ENCODE measurements at regions of chr10 and their contacts with region 1.

Region 1: DNA sequence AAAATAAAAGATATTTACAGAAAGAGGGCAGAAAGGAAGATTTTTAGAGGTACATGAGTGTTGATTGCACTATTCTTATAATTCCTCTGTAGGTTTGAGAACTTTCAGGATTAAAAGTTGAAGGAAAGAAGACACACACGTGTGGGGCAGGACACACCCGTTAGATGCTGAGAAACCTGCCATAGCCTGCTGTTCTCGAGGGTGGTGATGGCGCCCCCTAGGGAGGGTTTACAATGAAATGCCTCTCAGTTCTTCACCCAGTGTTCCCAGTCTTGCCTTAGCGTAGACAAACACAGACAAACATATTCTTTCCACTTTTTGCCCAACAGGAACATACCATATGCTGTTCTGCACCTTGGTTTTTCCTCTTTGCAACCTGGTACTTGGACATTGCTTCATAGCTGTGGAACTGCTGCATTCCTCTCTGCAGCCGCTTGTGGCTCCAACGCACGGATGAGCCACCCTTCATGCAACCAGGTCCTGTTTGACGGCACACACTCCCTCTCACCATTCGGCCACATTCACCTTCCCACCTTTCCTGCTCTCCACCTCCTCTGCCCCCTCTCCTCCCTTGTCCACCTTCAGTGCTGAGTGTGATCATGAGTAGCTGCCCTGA is 23.3 kb upstream of the HSPA12A start:
- DNase-seq: peak; percentile 55 to 61 (median 58)
- ATAC-seq: peak; percentile 91
- H3K4me3 ChIP-seq: no peak overlapping the region
- H3K27ac ChIP-seq: no peak overlapping the region
- H3K4me1 ChIP-seq: no peaks in the 10 kb centered on the region; a peak in 1 of 5 replicates
- H3K27me3 ChIP-seq: peaks cover 0 to 20% of the 10 kb centered on the region in 2 experiments; a peak in 3 of 5 replicates
- CTCF ChIP-seq: peak; percentile 61 to 68 (median 64)
- EP300 ChIP-seq: no peak
- POLR2A ChIP-seq: no peak
- RAD21 ChIP-seq: peak; percentile 13 to 52; a peak in 2 of 4 replicates

Region 2: DNA sequence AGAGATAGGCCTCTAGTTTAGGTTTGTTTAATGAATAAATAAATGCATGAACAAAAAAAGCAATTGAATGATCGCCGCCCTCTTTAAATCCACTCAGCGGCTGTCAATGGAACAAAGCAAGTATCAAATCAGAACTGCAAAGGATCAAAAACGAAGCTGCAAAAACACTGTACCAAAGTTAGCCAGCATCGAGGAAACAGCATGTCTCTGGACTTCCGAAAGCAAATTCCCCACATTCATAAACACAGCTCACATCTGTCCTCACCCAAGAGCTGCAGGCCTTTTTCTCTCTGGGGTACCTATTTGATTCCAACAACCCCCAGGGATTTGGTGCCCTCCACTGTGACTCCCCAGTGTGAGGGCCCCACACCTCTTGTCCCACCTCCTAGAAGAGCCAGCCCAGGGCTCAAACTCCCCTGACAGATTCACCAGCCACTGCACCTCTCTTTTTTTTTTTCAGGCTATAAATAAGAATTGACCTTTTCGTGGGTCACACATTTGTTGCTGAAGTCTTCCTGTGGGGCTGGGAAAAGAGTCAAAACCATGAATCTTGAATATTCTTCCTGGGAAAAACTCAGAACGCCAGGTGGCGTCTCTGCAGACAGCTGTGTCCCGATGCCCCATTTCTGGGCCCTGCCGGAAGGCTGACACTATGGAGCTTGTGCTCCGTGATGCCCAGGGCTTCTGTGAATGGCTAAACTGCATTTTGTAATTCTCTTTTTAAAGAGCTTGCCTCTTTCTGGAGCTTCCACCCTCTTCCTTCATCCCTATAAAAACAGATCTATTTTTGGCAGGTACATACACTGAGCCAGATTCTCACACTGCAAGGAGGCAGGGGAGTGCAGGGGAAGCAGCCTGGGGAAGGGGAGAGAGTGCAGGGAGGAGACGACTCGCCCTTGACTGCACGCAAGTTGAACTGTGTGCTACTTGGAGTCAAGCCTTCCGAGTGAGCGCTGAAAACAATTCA is 75.0 kb before region 1 on chr10:
- CTCF ChIA-PET with region 1: interaction called, 5 read pairs
- POLR2A ChIA-PET with region 1: no interaction called
- in situ Hi-C with region 1: no loop called
- intact Hi-C with region 1: loop called (anchors 2 kb)
- DNase-seq: peak in 2 of 4 experiments; percentile 14 to 17
- ATAC-seq: no peak
- H3K4me3 ChIP-seq: no peak overlapping the region
- H3K27ac ChIP-seq: no peak overlapping the region
- H3K4me1 ChIP-seq: no peaks in the 10 kb centered on the region; a peak in 1 of 5 replicates
- H3K27me3 ChIP-seq: peaks cover 0 to 24% of the 10 kb centered on the region in 2 experiments; a peak in 1 of 5 replicates
- CTCF ChIP-seq: peak; percentile 17 to 30 (median 24); a peak in 3 of 6 replicates
- EP300 ChIP-seq: no peak
- POLR2A ChIP-seq: no peak
- RAD21 ChIP-seq: 0 out of 4 replicates have a peak, but pooled peaks of 1 of the 2 experiments have one; percentile 14

Measured in K562 (cell line).